Spleen (tissue), 13 donors: ENCODE measurements at regions of chr19 and their contacts with region 1.

Region 1: GRCh38 chr19:34639491-34640085 is 37.4 kb downstream of the SCGB2B2 start:
- DNase-seq: no peak
- H3K4me3 ChIP-seq: no peak overlapping the region
- H3K27ac ChIP-seq: no peak overlapping the region
- H3K4me1 ChIP-seq: no peaks in the 10 kb centered on the region
- H3K27me3 ChIP-seq: no peaks in the 10 kb centered on the region
- CTCF ChIP-seq: peak; percentile 44 to 79 (median 69)
- POLR2A ChIP-seq: no peak

Region 2: DNA sequence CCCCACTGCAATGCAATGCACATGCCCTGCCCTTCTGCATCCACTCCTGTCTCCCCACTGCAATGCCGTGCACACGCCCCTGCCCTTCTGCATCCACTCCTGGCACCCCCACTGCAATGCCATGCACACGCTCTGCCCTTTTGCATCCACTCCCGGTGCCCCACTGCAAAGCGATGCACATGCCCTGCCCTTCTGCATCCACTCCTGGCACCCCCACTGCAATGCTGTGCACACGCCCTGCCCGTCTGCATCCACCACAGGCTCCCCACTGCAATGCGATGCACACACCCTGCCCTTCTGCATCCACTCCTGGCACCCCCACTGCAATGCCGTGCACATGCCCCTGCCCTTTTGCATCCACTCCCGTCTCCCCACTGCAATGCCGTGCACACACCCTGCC is 744.8 kb before region 1 on chr19:
- intact Hi-C with region 1: no loop called
- DNase-seq: no peak
- H3K4me3 ChIP-seq: no peak overlapping the region
- H3K27ac ChIP-seq: no peak overlapping the region
- H3K4me1 ChIP-seq: no peaks in the 10 kb centered on the region
- H3K27me3 ChIP-seq: peaks cover 0 to 11% (median 0%) of the 10 kb centered on the region in 7 donors
- CTCF ChIP-seq: no peak
- POLR2A ChIP-seq: no peak

Region 3: DNA sequence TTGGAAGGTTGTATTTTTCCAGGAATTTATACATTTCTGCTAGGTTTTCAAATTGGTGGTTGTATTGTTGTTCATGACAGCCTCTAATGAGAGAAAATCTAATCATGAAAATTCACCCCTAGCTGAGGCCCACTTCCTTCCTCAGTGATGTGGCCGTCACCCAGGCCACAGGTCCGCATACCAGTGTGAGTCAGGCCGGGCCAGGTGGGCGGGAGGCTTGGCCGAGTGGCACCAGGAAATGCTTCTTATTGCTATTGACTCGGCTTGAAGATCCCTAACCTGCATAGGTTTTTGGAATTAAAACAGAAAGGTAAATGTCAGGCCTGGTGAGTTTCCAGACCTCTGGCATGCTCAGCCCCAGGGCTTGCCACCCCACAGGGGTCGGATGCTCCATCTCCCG is 51.3 kb before region 1 on chr19:
- intact Hi-C with region 1: no loop called
- DNase-seq: no peak
- H3K4me3 ChIP-seq: no peak overlapping the region
- H3K27ac ChIP-seq: no peak overlapping the region
- H3K4me1 ChIP-seq: no peaks in the 10 kb centered on the region
- H3K27me3 ChIP-seq: no peaks in the 10 kb centered on the region
- CTCF ChIP-seq: no peak
- POLR2A ChIP-seq: no peak

Region 4: DNA sequence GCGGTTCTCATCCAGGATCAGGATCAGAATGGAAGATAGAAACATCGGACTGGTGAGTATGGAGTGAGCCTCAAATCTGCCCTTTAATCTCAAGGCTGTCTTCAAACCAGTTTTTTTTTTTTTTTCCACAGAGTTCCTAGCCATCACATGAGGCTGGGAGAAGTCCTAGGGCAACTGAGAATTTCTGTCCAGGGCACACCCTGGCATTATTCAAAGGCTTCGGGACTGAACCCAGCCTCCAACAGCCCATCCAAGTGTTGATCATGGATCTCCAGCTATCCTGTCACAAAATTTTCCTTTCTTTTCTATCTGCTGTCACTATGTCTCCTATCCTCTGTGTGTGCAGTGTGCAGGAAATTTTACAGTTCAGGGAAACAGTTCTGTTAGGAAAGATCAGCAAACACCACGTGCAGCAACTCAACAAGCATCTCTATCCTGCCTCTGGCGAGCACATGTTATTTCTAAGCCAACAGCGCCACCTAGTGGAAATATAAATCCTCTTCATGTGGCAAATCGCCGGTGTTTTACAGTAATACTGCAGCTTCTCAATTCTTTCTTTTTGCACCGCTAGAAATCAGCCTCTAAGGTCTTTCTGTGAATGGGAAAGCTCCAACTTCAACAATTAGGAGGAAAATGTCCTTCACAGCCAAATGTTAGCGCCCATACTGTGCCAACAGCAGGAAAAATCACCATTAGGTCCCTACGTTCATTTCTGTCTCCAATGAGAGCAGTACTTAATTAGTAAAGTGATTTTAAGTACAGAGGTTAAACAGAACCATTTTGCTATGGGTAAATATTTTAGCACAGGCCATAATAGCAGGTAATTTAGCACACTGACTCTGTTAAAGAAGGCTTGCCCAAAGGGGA is 73.0 kb after region 1 on chr19:
- intact Hi-C with region 1: loop called (anchors 5 kb)
- DNase-seq: no peak
- H3K4me3 ChIP-seq: no peak overlapping the region
- H3K27ac ChIP-seq: no peak overlapping the region
- H3K4me1 ChIP-seq: peaks cover 0 to 5% (median 0%) of the 10 kb centered on the region in 6 donors
- H3K27me3 ChIP-seq: peaks cover 0 to 29% (median 0%) of the 10 kb centered on the region in 7 donors
- CTCF ChIP-seq: peak; percentile 64 to 88 (median 83)
- POLR2A ChIP-seq: no peak